ENCODE measurements at regions of chr15 and their contacts with region 1.

Region 1: GRCh38 chr15:40274350-40275274 is 8.3 kb downstream of the ANKRD63 start:
- DNase-seq: peak; percentile 60
- ATAC-seq: peak; percentile 14
- H3K4me3 ChIP-seq: peak overlapping the region in 1 of 3 experiments; percentile 41; a peak in 1 of 6 replicates
- H3K27ac ChIP-seq: no peak overlapping the region
- H3K4me1 ChIP-seq: peaks cover 43% of the 10 kb centered on the region
- H3K27me3 ChIP-seq: peaks cover 1 to 40% of the 10 kb centered on the region in 2 experiments; a peak in 4 of 5 replicates
- CTCF ChIP-seq: peak; percentile 99
- EP300 ChIP-seq: no peak
- POLR2A ChIP-seq: no peak
- RAD21 ChIP-seq: peak; percentile 97

Region 2: DNA sequence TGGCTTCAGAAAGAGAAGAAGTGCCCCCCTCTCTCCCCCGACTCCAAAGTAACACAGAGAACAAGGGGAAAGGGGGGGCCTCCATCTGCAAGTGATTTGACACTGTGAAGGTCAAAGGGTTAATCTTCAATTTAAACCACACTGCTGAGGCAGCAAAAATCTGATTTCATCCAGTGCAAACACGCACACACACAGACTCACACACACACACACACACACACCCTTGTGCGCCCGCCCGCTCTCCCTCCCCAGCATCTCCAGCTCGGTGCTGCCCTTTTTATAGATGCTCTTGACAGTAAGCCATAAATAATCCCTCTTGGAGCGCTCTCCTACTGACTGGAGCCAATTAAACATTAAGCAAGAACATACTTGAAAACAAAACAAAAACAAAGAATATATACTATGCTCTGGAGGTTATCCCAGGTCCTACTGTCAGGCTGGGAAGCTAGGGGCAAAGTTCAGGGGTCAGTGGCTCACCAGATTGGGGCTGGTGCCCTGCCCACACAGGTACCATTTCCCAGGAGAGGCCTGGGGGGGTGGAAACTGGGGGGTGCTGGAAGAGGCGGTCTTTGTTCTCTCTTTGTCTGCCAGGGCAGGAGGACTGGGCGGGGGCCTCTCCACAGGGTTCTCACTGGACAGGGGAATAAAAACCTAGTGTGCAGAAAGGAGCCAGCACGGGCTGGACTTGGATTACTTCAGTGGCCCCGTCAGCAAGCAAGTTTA is 182.2 kb before region 1 on chr15:
- CTCF ChIA-PET with region 1: no interaction called
- POLR2A ChIA-PET with region 1: no interaction called
- in situ Hi-C with region 1: no loop called
- intact Hi-C with region 1: no loop called
- DNase-seq: peak; percentile 84
- ATAC-seq: peak; percentile 66
- H3K4me3 ChIP-seq: peak overlapping the region; percentile 23 to 61 (median 34); a peak in 4 of 6 replicates
- H3K27ac ChIP-seq: peak overlapping the region; percentile 86
- H3K4me1 ChIP-seq: peaks cover 99% of the 10 kb centered on the region
- H3K27me3 ChIP-seq: no peaks in the 10 kb centered on the region
- CTCF ChIP-seq: no peak
- EP300 ChIP-seq: peak; percentile 23 to 80; a peak in 2 of 4 replicates
- POLR2A ChIP-seq: peak in 1 of 2 experiments; percentile 46; a peak in 1 of 4 replicates
- RAD21 ChIP-seq: no peak

Region 3: DNA sequence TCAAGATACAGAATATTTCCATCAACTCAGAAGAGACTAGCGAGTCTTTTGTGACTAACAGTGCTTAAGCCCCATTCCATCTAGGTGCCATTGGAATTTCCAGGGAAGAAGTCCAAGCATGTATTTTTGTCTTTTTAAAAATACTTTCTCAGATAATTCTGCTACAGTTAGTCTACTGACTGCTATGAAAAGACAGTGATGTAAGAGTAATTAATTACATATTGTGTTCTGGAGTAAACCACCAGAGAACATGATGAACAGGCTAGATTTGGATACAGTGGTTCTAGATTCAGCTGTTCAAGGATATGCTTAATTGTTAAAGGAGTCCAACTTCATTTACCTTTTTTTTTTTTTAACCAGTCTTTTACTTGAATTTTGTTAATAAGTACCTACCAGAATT is 70.5 kb before region 1 on chr15:
- CTCF ChIA-PET with region 1: no interaction called
- POLR2A ChIA-PET with region 1: no interaction called
- in situ Hi-C with region 1: no loop called
- intact Hi-C with region 1: no loop called
- DNase-seq: no peak
- ATAC-seq: no peak
- H3K4me3 ChIP-seq: no peak overlapping the region
- H3K27ac ChIP-seq: no peak overlapping the region
- H3K4me1 ChIP-seq: no peaks in the 10 kb centered on the region
- H3K27me3 ChIP-seq: no peaks in the 10 kb centered on the region
- CTCF ChIP-seq: no peak
- EP300 ChIP-seq: no peak
- POLR2A ChIP-seq: no peak
- RAD21 ChIP-seq: no peak

Region 4: GRCh38 chr15:40217159-40217824 is 57.3 kb before region 1 on chr15:
- CTCF ChIA-PET with region 1: interaction called, 266 read pairs
- POLR2A ChIA-PET with region 1: interaction called, 5 read pairs
- in situ Hi-C with region 1: loop called (anchors 5 kb)
- intact Hi-C with region 1: loop called (anchors 1 kb)
- DNase-seq: peak; percentile 69
- ATAC-seq: peak; percentile 89
- H3K4me3 ChIP-seq: no peak overlapping the region
- H3K27ac ChIP-seq: no peak overlapping the region
- H3K4me1 ChIP-seq: no peaks in the 10 kb centered on the region
- H3K27me3 ChIP-seq: no peaks in the 10 kb centered on the region
- CTCF ChIP-seq: peak; percentile 80
- EP300 ChIP-seq: no peak
- POLR2A ChIP-seq: no peak
- RAD21 ChIP-seq: peak; percentile 67; the same call in 1 of the 2 replicates

Region 5: DNA sequence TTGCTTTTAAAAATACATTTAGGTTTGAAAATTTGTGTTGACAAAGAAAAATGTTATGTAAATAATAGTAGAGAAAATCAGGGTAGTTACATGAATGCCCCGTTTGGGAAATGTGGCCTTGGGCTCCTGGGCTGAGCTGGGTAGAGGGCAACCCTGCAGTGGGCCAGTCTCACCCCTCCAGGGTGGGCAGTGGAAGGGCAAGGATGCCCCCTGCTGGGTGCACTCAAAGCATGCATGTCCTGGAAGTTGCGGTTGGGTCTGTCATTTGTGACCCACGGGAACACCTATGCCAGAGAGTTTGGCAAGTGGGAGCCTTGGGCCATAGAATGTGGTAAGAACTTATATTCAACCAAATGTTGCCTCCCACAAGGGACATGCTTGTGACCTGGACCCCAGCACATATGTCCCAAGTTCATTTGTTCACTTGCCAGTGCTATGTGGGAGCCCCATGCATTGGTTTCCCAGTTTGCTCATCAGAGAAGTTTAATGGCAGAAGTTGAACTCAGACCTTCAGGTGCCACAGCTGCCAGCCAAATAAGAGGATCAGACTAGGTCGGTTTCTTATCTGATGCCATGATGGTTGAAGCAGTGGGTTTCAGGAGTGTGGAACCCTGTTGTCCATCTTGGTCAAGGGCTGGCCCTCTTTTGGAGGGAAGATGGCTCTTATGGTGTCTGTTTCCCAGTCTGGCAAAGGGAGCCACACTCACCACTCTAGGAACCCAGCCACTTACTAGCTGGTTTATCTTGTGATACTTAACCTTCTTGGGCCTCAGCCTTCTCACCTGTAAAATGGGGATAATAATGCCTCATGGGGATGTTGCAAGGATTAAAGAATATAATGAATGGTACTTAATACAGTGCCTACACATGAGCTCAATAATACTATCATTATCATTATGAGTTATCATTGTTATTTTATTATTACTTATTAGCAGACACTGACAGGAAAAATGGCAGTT is 35.7 kb after region 1 on chr15:
- CTCF ChIA-PET with region 1: interaction called, 17 read pairs
- POLR2A ChIA-PET with region 1: no interaction called
- in situ Hi-C with region 1: loop called (anchors 5 kb)
- intact Hi-C with region 1: loop called (anchors 1 kb)
- DNase-seq: peak; percentile 46
- ATAC-seq: peak; percentile 76
- H3K4me3 ChIP-seq: no peak overlapping the region
- H3K27ac ChIP-seq: no peak overlapping the region
- H3K4me1 ChIP-seq: no peaks in the 10 kb centered on the region
- H3K27me3 ChIP-seq: peaks cover 2 to 63% of the 10 kb centered on the region in 2 experiments; a peak in 4 of 5 replicates
- CTCF ChIP-seq: peak; percentile 81
- EP300 ChIP-seq: no peak
- POLR2A ChIP-seq: no peak
- RAD21 ChIP-seq: peak; percentile 81

Measured in HepG2 (cell line).